ENCODE measurements at regions of chr2 and their contacts with region 1.

Region 1: DNA sequence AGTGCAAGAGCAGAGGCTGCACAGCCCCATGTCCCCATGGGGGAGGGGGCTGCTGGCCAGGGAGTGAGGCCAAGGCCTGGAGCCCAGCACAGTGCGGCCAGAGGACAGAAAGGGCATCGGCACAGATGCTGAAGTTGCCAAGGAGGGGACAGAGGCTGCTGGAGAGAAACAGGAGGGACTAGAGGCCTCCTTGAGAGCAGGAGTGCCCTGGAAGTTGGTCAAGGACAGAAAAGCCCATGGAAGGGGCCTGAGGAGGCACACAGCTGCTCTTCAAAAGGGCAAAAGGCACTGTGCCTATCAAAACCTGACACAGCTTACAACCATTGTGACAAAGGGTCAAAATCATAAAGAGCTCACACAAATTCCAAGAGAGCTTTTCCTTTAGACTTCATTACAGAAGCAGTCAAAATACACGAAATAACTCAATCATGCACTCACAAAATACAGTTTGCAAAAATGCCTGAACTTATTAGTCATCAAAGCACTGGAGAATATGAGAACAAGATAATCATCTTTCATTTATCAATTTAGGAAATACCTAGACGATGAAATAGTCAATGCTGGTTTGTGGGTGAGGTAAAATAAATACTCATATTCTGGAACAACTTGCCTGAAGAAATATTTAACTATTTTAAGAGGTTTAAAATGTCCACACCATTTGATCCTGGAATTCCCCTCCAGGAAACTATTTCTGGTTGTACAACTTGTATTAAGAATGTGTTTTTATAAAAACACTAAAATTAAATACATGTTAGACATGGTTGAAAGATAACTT is 79.6 kb downstream of the USP40 start:
- DNase-seq: peak; percentile 63
- H3K4me3 Mint-ChIP-seq: peak overlapping the region; percentile 36
- H3K27ac Mint-ChIP-seq: peak overlapping the region; percentile 84
- H3K4me1 Mint-ChIP-seq: peaks cover 39% of the 10 kb centered on the region
- H3K27me3 Mint-ChIP-seq: no peaks in the 10 kb centered on the region
- CTCF ChIP-seq: no peak

Region 2: DNA sequence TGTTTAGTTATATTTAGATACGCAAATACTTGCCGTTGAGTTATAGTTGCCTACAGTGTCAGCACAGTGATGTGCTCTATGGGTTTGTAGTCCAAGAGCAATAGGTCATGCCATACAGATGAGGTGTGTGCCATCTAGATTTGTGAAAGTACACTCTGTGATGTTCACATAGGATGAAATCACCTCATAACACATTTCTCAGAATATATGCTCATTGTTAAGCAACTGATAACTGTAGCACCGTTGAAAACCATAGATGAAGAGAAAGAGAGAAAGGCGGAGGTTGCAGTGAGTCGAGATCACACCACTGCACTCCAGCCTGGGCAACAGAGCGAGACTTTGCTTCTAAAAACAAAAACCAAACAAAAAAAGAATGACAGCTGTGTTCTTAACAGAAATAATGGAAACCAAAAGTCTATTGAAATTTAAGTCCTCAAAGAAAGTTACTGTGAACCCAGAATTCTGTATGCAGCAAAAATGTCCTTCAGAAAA is 123.2 kb before region 1 on chr2:
- CTCF ChIA-PET with region 1: no interaction called
- POLR2A ChIA-PET with region 1: no interaction called
- intact Hi-C with region 1: no loop called
- DNase-seq: no peak
- H3K4me3 Mint-ChIP-seq: no peak overlapping the region
- H3K27ac Mint-ChIP-seq: no peak overlapping the region
- H3K4me1 Mint-ChIP-seq: no peaks in the 10 kb centered on the region
- H3K27me3 Mint-ChIP-seq: no peaks in the 10 kb centered on the region
- CTCF ChIP-seq: no peak

Region 3: GRCh38 chr2:233443468-233444183 is 43.3 kb before region 1 on chr2:
- CTCF ChIA-PET with region 1: no interaction called
- POLR2A ChIA-PET with region 1: no interaction called
- intact Hi-C with region 1: no loop called
- DNase-seq: peak; percentile 85
- H3K4me3 Mint-ChIP-seq: no peak overlapping the region
- H3K27ac Mint-ChIP-seq: peak overlapping the region; percentile 33
- H3K4me1 Mint-ChIP-seq: peaks cover 5% of the 10 kb centered on the region
- H3K27me3 Mint-ChIP-seq: no peaks in the 10 kb centered on the region
- CTCF ChIP-seq: peak; percentile 77

Region 4: DNA sequence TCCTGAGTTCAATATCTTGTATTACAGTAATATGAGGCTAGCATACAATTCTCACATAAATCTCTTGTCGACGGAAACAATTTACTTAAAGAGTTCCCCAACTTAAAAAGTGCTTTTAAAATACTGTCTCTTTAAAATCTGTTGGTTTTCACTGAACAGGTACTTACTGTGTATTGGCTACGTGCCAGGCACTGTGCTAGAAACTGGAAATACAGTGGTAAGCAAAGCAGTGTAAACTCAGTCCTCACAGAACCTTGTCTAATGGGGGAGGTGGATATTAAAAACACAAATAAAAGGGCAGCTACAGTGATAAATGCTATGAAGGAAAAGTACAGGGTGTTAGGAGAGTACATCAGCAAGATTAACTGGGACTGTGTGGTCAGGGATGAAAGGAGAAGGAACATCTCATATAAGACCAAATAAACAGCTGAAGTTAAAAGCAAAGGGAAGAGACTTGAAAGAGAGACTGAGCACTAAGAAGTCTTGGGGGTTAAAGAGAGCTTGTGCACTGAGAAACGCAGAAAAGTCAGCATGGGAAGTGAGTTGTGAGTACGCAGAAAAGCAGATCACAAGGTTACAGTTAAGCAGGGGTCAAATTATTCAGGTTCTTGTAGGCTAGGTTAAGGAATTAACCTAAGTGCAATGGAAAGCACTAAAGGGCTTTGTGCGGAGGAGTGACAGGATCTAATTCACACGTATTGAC is 27.1 kb after region 1 on chr2:
- CTCF ChIA-PET with region 1: no interaction called
- POLR2A ChIA-PET with region 1: no interaction called
- intact Hi-C with region 1: no loop called
- DNase-seq: no peak
- H3K4me3 Mint-ChIP-seq: no peak overlapping the region
- H3K27ac Mint-ChIP-seq: no peak overlapping the region
- H3K4me1 Mint-ChIP-seq: peaks cover 6% of the 10 kb centered on the region
- H3K27me3 Mint-ChIP-seq: no peaks in the 10 kb centered on the region
- CTCF ChIP-seq: no peak

Region 5: DNA sequence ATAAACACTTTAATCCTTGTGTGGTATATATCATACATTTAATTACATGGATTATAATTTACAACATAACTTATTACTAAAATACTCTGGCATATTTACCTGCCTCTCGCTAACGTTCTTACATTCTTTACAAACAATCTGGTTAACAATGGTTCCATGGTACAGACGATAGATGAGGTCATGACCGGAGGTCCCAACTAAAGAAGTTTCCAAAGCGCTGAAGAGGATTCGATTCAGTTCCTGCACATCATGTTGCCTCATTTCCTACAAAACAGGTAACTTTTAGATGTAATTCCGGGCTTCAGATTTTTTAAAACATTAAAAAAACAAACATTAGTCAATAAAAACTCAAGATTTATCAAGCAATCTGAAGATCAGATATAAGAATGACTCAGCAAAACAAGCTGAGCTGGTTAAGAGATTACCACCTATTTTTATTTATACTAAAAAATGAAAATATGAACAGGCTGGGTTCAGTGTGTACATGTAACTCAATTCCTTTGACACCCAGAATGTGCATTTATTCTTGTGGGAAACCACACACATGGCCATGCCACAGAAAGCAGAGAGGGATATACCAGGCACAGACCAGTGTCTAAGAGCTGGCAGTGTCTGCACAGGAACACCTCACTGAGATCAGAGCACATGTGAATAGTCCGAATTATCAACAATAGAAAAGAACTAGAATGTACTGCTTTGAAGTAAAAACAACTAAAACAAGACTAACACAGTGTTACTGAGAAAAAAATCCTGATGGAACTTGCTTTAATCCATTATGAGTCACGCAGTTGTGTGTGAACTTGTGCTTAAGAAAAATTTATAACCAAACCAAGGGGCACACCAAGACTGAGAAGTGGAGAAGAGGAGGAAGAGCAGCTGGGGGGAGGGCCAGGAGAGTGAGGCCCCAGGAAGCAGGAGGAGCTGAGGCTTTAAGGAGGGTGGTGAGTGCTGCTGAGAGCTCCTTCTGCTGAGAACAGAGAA is 70.1 kb after region 1 on chr2:
- CTCF ChIA-PET with region 1: interaction called, 3 read pairs
- POLR2A ChIA-PET with region 1: interaction called, 5 read pairs
- intact Hi-C with region 1: loop called (anchors 10 kb)
- DNase-seq: peak; percentile 76
- H3K4me3 Mint-ChIP-seq: peak overlapping the region; percentile 2
- H3K27ac Mint-ChIP-seq: peak overlapping the region; percentile 73
- H3K4me1 Mint-ChIP-seq: peaks cover 13% of the 10 kb centered on the region
- H3K27me3 Mint-ChIP-seq: no peaks in the 10 kb centered on the region
- CTCF ChIP-seq: no peak

Region 6: DNA sequence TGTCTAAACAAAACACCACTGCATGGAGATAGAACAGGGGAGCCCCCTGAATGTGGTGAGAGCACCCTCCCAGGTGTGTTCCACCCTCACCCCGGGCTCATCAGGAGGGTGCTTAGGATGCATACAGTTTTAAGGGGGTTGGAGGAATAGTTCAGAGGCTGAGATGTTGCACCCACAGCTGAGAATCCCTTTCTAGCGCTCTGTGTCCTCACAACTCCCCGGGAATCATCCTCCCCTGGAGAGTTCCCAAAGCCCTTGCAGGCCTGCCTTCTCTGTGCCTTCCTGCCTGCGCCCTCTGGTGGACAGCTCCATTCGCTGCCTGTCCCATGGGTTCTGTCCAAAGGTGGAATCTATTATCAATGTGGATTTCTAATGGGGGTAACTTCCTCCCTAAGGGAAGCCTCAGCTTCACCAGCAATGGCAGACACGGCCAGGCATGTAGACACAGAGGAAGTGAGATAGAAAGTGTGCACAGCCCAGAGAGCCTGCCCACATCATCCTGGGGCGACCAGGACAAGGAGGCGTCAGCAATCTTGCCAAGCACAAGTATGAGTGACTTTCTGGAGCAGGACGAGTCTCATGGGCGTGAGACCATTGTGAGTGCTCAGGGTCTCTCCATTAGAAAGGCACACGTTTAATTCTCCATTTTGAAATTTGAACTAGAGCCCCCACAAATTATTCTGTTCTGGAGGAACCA is 224.5 kb after region 1 on chr2:
- CTCF ChIA-PET with region 1: interaction called, 5 read pairs
- POLR2A ChIA-PET with region 1: interaction called, 5 read pairs
- intact Hi-C with region 1: loop called (anchors 5 kb)
- DNase-seq: peak; percentile 86
- H3K4me3 Mint-ChIP-seq: no peak overlapping the region
- H3K27ac Mint-ChIP-seq: no peak overlapping the region
- H3K4me1 Mint-ChIP-seq: peaks cover 31% of the 10 kb centered on the region
- H3K27me3 Mint-ChIP-seq: no peaks in the 10 kb centered on the region
- CTCF ChIP-seq: peak; percentile 89

Region 7: GRCh38 chr2:233832869-233833311 is 345.9 kb after region 1 on chr2:
- CTCF ChIA-PET with region 1: no interaction called
- POLR2A ChIA-PET with region 1: no interaction called
- intact Hi-C with region 1: loop called (anchors 2 kb)
- DNase-seq: peak; percentile 68
- H3K4me3 Mint-ChIP-seq: no peak overlapping the region
- H3K27ac Mint-ChIP-seq: no peak overlapping the region
- H3K4me1 Mint-ChIP-seq: no peaks in the 10 kb centered on the region
- H3K27me3 Mint-ChIP-seq: no peaks in the 10 kb centered on the region
- CTCF ChIP-seq: peak; percentile 26